ENCODE measurements at regions of chr15 and their contacts with region 1.

Region 1: GRCh38 chr15:51874751-51875528 is 45.5 kb downstream of the TMOD3 start:
- DNase-seq: no peak
- H3K4me3 Mint-ChIP-seq: no peak overlapping the region
- H3K27ac Mint-ChIP-seq: no peak overlapping the region
- H3K4me1 Mint-ChIP-seq: no peaks in the 10 kb centered on the region
- H3K27me3 Mint-ChIP-seq: no peaks in the 10 kb centered on the region

Region 2: DNA sequence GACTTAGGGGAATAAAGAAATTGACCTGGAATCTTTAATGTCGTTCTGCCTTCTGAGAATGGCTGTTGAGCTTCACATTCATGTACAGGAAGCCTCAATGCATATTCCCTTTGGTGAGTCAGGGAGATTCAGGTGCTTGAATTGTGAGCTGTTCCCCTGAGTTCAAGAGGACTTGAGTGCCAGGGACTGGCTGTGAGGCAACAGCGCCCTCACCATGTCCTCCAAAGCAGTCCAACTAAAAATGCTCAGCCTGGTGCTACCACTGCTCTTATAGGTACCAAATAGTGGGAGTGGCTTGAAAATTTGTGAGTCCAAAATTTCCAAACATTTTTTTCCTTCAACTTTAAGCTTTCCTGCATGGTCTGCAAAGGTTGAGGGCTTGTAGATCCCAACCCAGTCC is 42.6 kb after region 1 on chr15:
- CTCF ChIA-PET with region 1: no interaction called
- POLR2A ChIA-PET with region 1: no interaction called
- DNase-seq: no peak
- H3K4me3 Mint-ChIP-seq: no peak overlapping the region
- H3K27ac Mint-ChIP-seq: no peak overlapping the region
- H3K4me1 Mint-ChIP-seq: no peaks in the 10 kb centered on the region
- H3K27me3 Mint-ChIP-seq: no peaks in the 10 kb centered on the region

Region 3: DNA sequence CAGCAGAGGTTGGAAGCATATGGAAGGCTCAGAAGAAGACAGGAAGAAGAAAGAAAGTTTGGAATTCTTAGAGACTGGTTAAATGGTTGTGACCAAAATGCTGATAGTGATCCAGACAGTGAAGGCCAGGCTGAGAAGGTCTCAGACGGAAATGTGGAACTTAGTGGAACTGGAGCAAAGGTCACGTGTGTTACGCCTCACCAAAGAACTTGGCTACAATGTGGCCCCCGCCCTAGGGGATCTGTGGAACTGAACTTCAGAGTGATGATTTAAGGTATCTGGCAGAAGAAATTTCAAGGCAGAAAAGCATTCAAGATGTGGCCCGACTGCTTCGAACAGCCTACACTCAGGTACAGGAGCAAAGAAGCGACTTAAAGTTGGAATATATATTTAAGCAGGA is 570.6 kb after region 1 on chr15:
- CTCF ChIA-PET with region 1: no interaction called
- POLR2A ChIA-PET with region 1: interaction called, 10 read pairs
- DNase-seq: no peak
- H3K4me3 Mint-ChIP-seq: no peak overlapping the region
- H3K27ac Mint-ChIP-seq: no peak overlapping the region
- H3K4me1 Mint-ChIP-seq: peaks cover 10% of the 10 kb centered on the region
- H3K27me3 Mint-ChIP-seq: no peaks in the 10 kb centered on the region

Measured in activated CD4-positive, alpha-beta T cell treated with anti-CD3 and anti-CD28 coated beads, Interleukin-2, amount 10 ng/mL, durations not matched to agents 7 days and 5 days (primary cell).